Naive thymus-derived CD4-positive, alpha-beta T cell (primary cell): ENCODE measurements at regions of chr3 and their contacts with region 1.

Region 1: DNA sequence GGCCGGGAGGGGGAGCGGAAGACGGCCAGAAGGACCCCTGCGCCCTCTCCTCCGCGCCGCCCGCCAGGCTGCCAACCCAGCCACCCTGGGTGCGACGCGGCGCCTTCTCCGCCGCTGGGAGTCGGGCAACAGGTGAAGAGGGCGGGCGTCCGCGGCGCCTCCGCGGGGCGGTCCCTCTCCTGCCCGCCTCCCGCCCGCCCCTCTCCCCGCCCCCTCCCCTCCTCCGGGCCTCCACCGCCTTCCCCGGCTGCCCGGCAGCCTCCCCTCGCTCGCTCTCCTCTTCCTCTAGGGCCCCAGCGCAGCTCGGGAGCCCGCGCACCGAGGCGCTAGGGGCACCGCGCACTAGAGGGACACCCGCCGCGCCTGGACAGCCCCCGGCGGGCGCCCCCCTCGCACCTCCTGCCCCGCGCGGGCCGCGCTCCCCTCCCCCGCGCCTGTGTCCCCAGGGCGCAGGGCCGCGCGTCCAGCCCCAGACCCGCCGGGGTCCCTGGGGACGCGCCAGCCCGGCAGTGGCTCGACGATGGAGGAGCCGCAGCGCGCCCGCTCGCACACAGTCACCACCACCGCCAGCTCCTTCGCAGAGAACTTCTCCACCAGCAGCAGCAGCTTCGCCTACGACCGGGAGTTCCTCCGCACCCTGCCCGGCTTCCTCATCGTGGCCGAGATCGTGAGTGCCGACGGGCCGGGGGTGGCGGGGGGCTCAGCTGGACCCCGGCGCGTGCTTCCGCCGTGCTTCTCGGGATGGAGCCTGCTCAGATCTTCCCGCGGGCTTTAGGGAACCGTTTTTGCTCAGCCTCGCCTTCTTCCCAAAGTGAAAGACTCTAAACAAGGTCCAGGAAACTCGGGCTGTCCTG is at the start of gene CMTM8:
- DNase-seq: peak; percentile 46 to 70 (median 67)
- ATAC-seq: peak; percentile 89
- H3K4me3 ChIP-seq: peak within 1 kb of the TSS; percentile 81
- H3K4me3 Mint-ChIP-seq: peak within 1 kb of the TSS; percentile 88 to 93 (median 90)
- H3K27ac ChIP-seq: peak within 1 kb of the TSS; percentile 64
- H3K27ac Mint-ChIP-seq: peak within 1 kb of the TSS; percentile 58 to 82 (median 74)
- H3K4me1 ChIP-seq: peaks cover 13 to 17% of the 10 kb centered on the region in 2 donors
- H3K4me1 Mint-ChIP-seq: peaks cover 37 to 58% (median 50%) of the 10 kb centered on the region in 7 donors
- H3K27me3 ChIP-seq: no peaks in the 10 kb centered on the region
- H3K27me3 Mint-ChIP-seq: peaks cover 0 to 25% (median 0%) of the 10 kb centered on the region in 5 donors
- total RNA-seq, gene CMTM8: 7.4 to 13.6 (median 8.6) TPM

Region 2: GRCh38 chr3:32045091-32045964 is 193.4 kb before region 1 on chr3:
- CTCF ChIA-PET with region 1: no interaction called
- POLR2A ChIA-PET with region 1: no interaction called
- intact Hi-C with region 1: no loop called
- DNase-seq: no peak
- ATAC-seq: no peak
- H3K4me3 ChIP-seq: no peak overlapping the region
- H3K4me3 Mint-ChIP-seq: no peak overlapping the region
- H3K27ac ChIP-seq: no peak overlapping the region
- H3K27ac Mint-ChIP-seq: no peak overlapping the region
- H3K4me1 ChIP-seq: no peaks in the 10 kb centered on the region
- H3K4me1 Mint-ChIP-seq: no peaks in the 10 kb centered on the region
- H3K27me3 ChIP-seq: no peaks in the 10 kb centered on the region
- H3K27me3 Mint-ChIP-seq: no peaks in the 10 kb centered on the region

Region 3: GRCh38 chr3:32106280-32106928 is 132.3 kb before region 1 on chr3 and contains the start of gene GPD1L:
- CTCF ChIA-PET with region 1: no interaction called
- POLR2A ChIA-PET with region 1: no interaction called
- intact Hi-C with region 1: loop called in 1 of 2 experiments (anchors 2 kb)
- DNase-seq: peak; percentile 75 to 96 (median 86)
- ATAC-seq: peak; percentile 99
- H3K4me3 ChIP-seq: peak within 1 kb of the TSS; percentile 77
- H3K4me3 Mint-ChIP-seq: peak within 1 kb of the TSS; percentile 86 to 97 (median 94)
- H3K27ac ChIP-seq: peak within 1 kb of the TSS; percentile 68
- H3K27ac Mint-ChIP-seq: peak within 1 kb of the TSS; percentile 77 to 96 (median 82)
- H3K4me1 ChIP-seq: peaks cover 14 to 15% of the 10 kb centered on the region in 2 donors
- H3K4me1 Mint-ChIP-seq: peaks cover 14 to 44% (median 39%) of the 10 kb centered on the region in 7 donors
- H3K27me3 ChIP-seq: no peaks in the 10 kb centered on the region
- H3K27me3 Mint-ChIP-seq: no peaks in the 10 kb centered on the region
- total RNA-seq, gene GPD1L: 14.1 to 23.8 (median 21.4) TPM

Region 4: DNA sequence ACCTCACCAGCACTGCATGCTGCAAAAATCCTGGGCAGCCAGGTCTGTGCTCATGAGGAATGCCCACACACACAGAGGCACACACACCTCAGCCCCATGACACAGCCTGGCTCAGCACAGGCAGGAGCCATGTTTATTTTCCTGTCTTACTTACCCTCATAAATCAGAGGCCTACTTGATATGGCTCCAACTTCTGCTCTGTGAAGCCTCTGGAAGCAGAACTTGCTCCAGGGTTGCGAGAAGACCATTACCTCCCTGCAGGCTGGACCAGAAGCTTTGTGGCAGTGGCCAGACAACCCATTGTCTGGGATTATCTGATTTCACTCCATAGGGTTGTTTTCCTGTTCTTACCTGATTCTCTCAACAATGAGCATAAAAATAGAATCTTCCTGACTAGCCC is 44.0 kb before region 1 on chr3:
- CTCF ChIA-PET with region 1: no interaction called
- POLR2A ChIA-PET with region 1: no interaction called
- intact Hi-C with region 1: no loop called
- DNase-seq: no peak
- ATAC-seq: no peak
- H3K4me3 ChIP-seq: no peak overlapping the region
- H3K4me3 Mint-ChIP-seq: no peak overlapping the region
- H3K27ac ChIP-seq: no peak overlapping the region
- H3K27ac Mint-ChIP-seq: no peak overlapping the region
- H3K4me1 ChIP-seq: no peaks in the 10 kb centered on the region
- H3K4me1 Mint-ChIP-seq: peaks cover 0 to 4% (median 0%) of the 10 kb centered on the region in 7 donors
- H3K27me3 ChIP-seq: no peaks in the 10 kb centered on the region
- H3K27me3 Mint-ChIP-seq: peaks cover under 1 to 24% (median 14%) of the 10 kb centered on the region in 5 donors

Region 5: DNA sequence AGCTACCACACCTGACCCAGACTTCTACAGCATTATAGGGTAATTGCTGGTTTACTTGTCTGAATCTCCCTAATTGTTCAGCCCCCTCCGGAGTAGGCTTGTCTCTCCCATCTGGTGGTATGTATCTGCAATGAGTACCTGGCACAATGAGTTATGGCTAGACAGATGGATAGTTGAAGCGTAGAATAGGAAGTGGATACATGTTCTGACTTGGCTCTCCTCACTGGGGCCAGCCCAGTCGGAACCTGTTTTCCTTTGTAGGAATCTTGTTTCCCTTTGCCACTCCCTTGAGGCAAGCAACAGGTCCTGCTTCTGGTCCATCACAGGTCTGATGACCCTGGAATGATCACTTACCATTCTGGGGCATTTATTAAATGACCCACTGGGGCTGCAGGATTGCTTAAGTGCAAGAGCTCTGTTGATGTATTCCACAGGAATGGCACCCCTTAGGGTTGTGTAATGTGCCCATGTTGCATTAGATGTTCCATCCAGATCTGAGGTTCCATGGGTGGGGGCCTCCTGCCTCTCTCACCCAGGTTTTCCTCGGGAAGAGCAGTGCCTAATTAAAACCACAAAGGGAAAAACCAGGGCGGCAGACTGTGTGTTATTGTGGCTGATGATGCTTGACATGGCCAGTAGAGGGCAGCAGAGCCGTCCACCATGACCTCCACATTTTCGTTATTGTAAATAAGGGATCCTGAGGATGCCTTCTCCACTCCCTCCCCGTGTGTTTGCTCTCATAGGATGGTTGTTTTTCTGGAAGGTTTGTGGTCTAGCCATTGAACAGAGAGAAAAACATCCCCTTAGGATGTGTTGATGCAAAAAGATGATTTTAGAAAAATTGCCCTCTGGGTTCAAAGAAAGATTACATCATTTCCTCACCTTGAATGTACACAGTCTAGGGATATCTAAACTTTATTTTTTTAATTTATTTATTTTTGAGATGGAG is 57.9 kb after region 1 on chr3:
- CTCF ChIA-PET with region 1: interaction called, 29 read pairs
- POLR2A ChIA-PET with region 1: interaction called, 6 read pairs
- intact Hi-C with region 1: loop called (anchors 1 to 2 kb)
- DNase-seq: peak; percentile 35 to 73 (median 62)
- ATAC-seq: peak; percentile 89
- H3K4me3 ChIP-seq: no peak overlapping the region
- H3K4me3 Mint-ChIP-seq: peak overlapping the region; percentile 60 to 80 (median 72)
- H3K27ac ChIP-seq: peak overlapping the region; percentile 53
- H3K27ac Mint-ChIP-seq: peak overlapping the region; percentile 89 to 99 (median 95)
- H3K4me1 ChIP-seq: peaks cover 15 to 18% of the 10 kb centered on the region in 2 donors
- H3K4me1 Mint-ChIP-seq: peaks cover 21 to 65% (median 39%) of the 10 kb centered on the region in 7 donors
- H3K27me3 ChIP-seq: no peaks in the 10 kb centered on the region
- H3K27me3 Mint-ChIP-seq: no peaks in the 10 kb centered on the region

Region 6: DNA sequence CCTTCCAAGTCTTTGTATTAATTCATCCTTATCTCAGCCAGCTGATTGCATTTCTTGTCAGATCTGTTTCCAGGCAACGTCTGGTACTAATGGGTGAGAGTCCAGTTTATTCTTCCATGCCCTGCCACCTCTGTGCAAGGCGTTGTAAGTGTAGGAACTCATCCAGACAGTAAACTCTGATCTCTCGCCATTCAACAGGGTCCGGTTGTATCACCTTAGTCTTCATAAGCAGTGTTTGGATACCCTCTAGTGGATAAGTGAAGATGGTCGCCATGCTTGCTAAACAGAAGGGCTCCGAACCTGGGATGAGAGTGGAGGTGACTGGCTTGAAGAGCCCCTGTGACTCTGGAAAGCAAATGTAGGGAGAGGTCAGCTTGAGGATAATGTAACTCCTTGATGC is 101.4 kb after region 1 on chr3:
- CTCF ChIA-PET with region 1: interaction called, 3 read pairs
- POLR2A ChIA-PET with region 1: interaction called, 4 read pairs
- intact Hi-C with region 1: loop called (anchors 1 kb)
- DNase-seq: peak in 7 of 9 donors; percentile 31 to 65 (median 56)
- ATAC-seq: peak; percentile 77
- H3K4me3 ChIP-seq: no peak overlapping the region
- H3K4me3 Mint-ChIP-seq: no peak overlapping the region
- H3K27ac ChIP-seq: no peak overlapping the region
- H3K27ac Mint-ChIP-seq: no peak overlapping the region
- H3K4me1 ChIP-seq: peaks cover 0 to 18% of the 10 kb centered on the region in 2 donors
- H3K4me1 Mint-ChIP-seq: peaks cover 18 to 30% (median 27%) of the 10 kb centered on the region in 7 donors
- H3K27me3 ChIP-seq: no peaks in the 10 kb centered on the region
- H3K27me3 Mint-ChIP-seq: no peaks in the 10 kb centered on the region

Region 7: GRCh38 chr3:32460031-32460749 is 221.5 kb after region 1 on chr3:
- CTCF ChIA-PET with region 1: no interaction called
- POLR2A ChIA-PET with region 1: no interaction called
- intact Hi-C with region 1: loop called in 1 of 2 experiments (anchors 2 kb)
- DNase-seq: peak; percentile 52 to 95 (median 94)
- ATAC-seq: peak; percentile 87
- H3K4me3 ChIP-seq: peak overlapping the region; percentile 34
- H3K4me3 Mint-ChIP-seq: peak overlapping the region in 5 of 10 donors; percentile 25 to 92 (median 87)
- H3K27ac ChIP-seq: peak overlapping the region; percentile 97
- H3K27ac Mint-ChIP-seq: no peak overlapping the region
- H3K4me1 ChIP-seq: peaks cover 71 to 77% of the 10 kb centered on the region in 2 donors
- H3K4me1 Mint-ChIP-seq: peaks cover 30 to 45% (median 33%) of the 10 kb centered on the region in 7 donors
- H3K27me3 ChIP-seq: no peaks in the 10 kb centered on the region
- H3K27me3 Mint-ChIP-seq: no peaks in the 10 kb centered on the region

Region 8: DNA sequence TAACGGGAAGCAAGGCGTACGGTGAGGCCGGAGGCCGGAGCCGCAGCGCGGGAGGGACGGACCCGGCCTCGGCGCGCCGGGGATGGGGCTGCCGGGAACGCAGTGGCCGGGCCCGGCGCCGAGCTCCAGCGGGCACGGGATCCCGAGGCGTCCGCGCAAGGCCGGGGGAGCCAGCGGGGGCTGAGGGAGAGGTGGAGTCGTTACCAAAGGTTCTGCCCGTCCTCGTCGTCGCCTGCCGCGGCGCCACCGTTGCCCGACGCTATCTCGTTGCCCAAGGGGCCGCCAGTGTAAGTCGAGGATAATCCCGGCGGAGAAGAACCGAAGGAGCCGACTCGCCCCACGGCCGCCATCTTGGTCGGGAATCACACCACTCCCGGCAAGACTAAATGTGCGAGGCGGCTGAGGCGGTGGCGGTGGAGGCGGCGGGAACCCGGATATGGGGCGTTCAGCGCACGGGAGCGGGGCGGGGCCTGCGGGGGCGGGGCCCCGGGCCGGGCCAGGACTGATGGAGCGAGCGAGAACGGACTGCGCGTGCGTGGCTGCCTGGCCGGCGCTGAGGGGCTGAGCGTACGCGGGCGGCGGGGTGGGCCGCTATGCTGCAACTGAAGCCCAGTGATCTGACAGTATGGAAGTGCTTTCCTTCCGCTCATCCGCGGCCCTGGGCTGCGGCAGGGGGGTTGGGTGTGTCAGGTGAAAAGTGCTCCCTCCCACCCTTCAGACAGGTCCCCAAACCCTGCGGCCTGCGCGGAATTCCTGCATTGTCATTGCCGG is 331.9 kb after region 1 on chr3 and contains the start of gene DYNC1LI1:
- CTCF ChIA-PET with region 1: interaction called, 3 read pairs
- POLR2A ChIA-PET with region 1: no interaction called
- intact Hi-C with region 1: loop called (anchors 2 kb)
- DNase-seq: peak; percentile 81 to 96 (median 88)
- ATAC-seq: peak; percentile 98
- H3K4me3 ChIP-seq: peak within 1 kb of the TSS; percentile 68
- H3K4me3 Mint-ChIP-seq: peak within 1 kb of the TSS; percentile 84 to 96 (median 92)
- H3K27ac ChIP-seq: peak within 1 kb of the TSS; percentile 90
- H3K27ac Mint-ChIP-seq: peak within 1 kb of the TSS; percentile 71 to 93 (median 86)
- H3K4me1 ChIP-seq: peaks cover 5 to 17% of the 10 kb centered on the region in 2 donors
- H3K4me1 Mint-ChIP-seq: peaks cover 0 to 39% (median 31%) of the 10 kb centered on the region in 7 donors
- H3K27me3 ChIP-seq: no peaks in the 10 kb centered on the region
- H3K27me3 Mint-ChIP-seq: no peaks in the 10 kb centered on the region
- total RNA-seq, gene DYNC1LI1: 26.1 to 28.5 (median 27.5) TPM